Left ventricle myocardium inferior (tissue), 1 donor: ENCODE measurements at regions of chr1 and their contacts with region 1.

Region 1: GRCh38 chr1:31669786-31670592 is 25.3 kb upstream of the PEF1 start:
- DNase-seq: peak; percentile 83
- H3K4me3 ChIP-seq: peak overlapping the region; percentile 61
- H3K27ac ChIP-seq: peak overlapping the region; percentile 81
- H3K4me1 ChIP-seq: peaks cover 82% of the 10 kb centered on the region
- H3K27me3 ChIP-seq: no peaks in the 10 kb centered on the region
- CTCF ChIP-seq: peak; percentile 35

Region 2: DNA sequence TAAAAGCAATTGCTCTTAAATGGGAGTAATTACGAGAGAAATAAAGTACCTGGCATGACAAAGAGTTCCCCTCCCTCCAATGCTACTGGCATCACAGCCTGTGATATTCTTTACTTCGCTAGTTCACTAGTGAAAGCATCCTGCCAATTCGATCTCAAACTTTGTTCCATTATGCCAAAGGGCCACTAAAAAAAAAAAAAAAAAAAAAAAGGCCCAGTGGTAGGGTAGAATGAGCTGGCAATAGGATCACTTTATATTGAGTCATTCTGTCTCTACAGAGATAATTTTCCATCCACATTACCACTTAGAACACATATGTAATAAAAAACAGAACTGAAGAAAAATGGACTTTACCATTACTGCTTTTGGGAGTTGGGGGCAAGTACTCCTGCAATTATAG is 615.6 kb before region 1 on chr1:
- intact Hi-C with region 1: no loop called
- DNase-seq: no peak
- H3K4me3 ChIP-seq: no peak overlapping the region
- H3K27ac ChIP-seq: no peak overlapping the region
- H3K4me1 ChIP-seq: peaks cover 86% of the 10 kb centered on the region
- H3K27me3 ChIP-seq: no peaks in the 10 kb centered on the region
- CTCF ChIP-seq: no peak

Region 3: DNA sequence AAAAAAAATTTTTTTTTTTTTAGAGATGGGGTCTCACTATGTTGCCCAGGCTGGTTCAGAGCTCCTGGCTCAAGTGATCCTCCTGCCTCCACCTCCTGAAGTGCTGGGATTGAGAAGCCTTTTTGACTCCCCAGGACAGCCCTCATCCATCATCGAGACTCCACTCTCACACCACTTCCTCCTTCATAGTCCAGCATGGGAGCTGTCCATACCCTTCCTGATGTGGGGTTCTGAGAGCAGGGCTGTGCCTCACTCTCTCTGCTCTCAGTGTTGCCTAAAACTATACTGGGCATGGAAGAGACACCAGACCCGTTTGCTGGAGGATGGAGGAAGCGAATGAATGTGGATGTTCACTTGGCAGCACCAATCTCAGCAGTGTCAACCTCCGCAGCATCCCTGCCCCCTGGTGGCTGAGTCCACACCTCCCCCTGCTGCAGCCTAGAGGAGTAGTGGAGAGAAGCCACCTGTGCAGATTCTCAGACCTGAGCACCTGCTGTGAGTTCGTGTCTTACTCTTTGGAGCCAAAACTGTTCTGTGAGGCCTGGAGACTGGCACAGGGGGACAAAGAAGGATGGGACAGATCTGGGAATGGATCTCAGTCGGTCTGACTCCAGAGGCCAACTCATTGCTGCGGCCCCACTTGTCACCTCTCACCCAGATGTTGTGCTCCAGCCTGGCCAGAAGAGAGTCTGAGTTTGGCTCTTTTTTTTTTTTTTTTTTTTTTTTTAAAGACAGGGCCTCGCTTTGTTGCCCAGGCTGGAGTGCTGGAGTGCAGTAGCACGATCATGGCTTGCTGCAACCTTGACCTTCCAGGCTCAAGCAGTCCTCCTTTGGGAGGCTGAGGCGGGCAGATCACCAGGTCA is 76.0 kb before region 1 on chr1:
- intact Hi-C with region 1: no loop called
- DNase-seq: peak; percentile 78
- H3K4me3 ChIP-seq: no peak overlapping the region
- H3K27ac ChIP-seq: no peak overlapping the region
- H3K4me1 ChIP-seq: peaks cover 49% of the 10 kb centered on the region
- H3K27me3 ChIP-seq: no peaks in the 10 kb centered on the region
- CTCF ChIP-seq: peak; percentile 89

Region 4: DNA sequence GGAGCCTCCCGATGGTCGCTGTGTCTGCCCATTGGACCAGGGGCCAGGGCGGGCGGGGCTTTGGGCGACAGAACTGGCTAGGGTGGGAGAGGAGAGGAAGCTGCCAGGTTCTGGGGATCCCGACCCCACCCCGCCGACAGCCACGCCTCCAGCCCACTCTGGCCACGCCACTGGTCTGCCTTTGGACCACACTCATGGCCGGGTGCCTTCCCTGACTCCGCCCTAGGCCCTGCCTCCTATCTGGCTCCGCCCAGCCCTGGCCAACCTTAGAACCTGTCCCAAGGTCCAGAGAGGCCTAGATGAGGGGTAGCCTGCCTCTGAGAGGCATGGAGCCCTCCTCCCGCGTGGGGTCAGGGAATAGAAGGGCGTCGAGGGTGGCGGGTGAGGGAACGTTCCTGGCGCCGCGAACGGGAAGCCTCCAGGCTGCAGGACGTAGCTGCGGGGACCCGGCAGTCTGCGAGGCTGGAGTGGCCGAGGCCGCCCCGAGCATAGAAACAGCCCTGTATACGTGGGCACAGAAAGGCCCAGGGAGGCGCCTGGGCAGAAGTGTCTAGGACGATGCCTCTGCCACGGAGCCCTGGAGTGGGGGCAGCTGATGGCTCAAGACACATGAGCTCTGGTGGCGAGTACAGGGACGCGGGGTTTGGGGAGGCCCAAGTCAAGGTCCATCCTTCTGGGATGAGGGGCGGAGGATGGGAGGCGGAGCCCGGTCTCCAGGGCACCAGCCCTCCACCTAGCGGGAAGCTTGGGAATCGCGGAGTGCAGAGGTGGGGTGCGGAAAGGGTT is 45.3 kb after region 1 on chr1:
- intact Hi-C with region 1: loop called (anchors 5 kb)
- DNase-seq: peak; percentile 95
- H3K4me3 ChIP-seq: peak overlapping the region; percentile 69
- H3K27ac ChIP-seq: peak overlapping the region; percentile 99
- H3K4me1 ChIP-seq: peaks cover 42% of the 10 kb centered on the region
- H3K27me3 ChIP-seq: peaks cover 4% of the 10 kb centered on the region
- CTCF ChIP-seq: peak; percentile 94